Right ventricle myocardium inferior (tissue), 1 donor: ENCODE measurements at regions of chr17 and their contacts with region 1.

Region 1: DNA sequence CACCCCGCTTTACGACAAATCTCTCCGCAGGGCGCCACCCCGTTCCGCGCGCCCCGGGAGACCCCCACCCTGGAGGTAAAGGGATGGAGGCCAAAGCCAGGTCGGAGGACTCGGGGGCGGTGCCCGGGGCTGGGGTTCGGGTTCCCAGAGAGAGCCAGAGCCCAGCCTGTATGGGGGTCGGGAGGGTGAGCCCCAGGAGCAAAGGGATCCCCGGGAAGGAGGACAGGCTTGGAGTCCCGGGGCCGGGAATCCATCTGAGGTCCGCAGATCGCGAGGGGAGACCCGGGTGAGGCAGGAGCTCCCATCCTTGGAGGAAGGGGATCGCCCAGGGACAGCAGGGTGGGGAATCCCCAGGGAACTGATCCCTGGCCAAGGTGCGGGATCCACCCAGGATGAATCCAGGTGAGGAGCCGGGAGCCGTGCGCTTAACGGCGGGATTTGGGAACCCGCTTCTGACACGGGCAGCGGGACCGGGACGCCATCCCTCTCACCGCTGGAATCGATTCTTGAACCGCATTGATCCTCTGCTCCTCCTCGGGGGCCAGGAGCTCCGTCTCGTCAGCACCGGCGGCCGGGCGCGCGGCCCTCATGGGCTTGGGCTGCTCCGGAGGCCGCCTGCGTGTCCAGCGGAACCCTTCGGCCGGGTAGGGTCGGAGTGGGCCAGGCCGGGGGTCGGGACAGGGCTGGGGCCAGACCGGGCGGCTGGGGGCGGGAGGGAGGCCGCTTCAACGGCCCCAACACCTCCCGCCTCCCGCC is at the start of gene MMD:
- DNase-seq: no peak
- ATAC-seq: peak; percentile 1
- total RNA-seq, gene MMD: 15.1 TPM

Region 2: DNA sequence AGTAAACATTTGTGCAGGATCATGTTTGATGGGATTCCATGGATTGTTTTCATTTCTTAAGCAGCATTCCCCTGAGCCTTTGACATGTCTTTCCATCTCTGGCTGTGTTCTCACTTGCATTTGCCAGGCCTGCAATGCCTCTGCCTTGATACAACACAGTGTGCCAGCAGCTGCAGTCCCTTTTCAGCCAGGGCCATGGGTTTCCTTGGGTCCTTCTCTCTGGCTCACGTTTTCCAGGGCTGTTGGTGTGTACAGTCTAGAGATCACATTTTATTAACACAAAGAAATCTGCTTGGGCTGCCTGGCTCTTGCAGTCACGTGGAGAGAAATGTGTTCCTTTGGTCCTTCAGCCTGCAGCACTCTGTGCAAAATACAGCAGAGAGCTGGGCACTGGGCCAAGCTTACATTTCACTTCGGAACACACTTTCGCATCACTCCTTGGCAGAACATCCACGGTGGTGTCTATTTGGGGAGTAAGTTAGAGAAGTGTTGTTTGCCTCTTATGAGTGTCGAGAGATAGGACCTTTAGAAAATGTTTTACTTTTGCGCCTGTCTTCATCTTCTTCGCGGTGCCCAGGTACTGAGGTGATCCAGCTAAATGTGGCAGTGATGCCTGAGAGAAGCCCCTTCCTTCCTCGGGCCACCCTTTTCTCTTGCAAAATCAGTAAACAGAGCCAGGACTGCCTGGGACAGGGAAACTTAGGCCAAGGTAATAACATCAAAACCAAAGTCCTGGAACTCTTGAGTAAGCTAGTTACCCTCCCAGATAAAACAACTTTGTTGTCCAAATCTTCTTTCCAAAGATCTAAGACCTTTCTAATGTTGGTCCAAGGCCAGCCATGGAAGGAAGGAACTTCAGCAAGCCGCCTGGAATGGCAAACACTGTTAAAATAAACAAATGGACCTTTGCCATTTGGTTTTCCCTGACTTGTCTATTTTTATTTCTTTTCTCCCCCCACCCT is 135.7 kb before region 1 on chr17:
- intact Hi-C with region 1: loop called (anchors 5 kb)
- DNase-seq: peak; percentile 92
- ATAC-seq: peak; percentile 85

Region 3: GRCh38 chr17:55437159-55437605 is 15.8 kb after region 1 on chr17:
- intact Hi-C with region 1: no loop called
- DNase-seq: no peak
- ATAC-seq: no peak

Region 4: DNA sequence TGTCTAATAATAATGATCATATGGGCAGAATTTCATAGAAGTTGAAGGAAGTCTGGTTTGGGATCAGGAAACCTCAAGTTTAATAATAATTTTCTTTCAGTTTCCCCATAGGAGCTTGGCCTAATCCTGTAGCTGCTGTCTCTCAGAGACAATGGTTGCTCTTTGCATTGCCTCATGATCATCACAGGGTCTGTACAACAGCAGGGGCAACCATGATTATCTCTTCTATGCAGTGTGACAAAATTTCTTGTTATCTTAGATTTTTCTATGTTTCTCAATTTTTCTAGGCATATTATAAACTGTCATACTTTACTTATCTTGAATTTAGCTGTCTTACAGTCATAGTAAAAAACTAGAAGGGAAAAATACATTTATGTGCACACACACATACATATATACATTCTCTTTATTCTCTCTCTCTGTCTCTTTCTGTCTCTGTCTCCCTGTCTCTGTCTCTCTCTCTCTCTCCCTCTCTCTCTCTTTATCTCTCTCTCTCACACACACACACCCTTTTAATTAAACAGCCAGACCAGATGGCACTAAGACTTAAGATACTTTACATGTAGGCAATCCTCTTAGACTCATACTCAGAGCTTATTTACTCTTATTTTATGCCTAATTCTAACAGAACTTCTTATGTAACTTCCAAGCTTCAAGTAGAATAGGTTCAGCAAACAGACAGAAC is 59.4 kb after region 1 on chr17:
- intact Hi-C with region 1: loop called (anchors 5 kb)
- DNase-seq: no peak
- ATAC-seq: no peak

Region 5: GRCh38 chr17:55513885-55514591 is 92.7 kb after region 1 on chr17:
- intact Hi-C with region 1: loop called (anchors 5 kb)
- DNase-seq: no peak
- ATAC-seq: peak; percentile 59

Region 6: DNA sequence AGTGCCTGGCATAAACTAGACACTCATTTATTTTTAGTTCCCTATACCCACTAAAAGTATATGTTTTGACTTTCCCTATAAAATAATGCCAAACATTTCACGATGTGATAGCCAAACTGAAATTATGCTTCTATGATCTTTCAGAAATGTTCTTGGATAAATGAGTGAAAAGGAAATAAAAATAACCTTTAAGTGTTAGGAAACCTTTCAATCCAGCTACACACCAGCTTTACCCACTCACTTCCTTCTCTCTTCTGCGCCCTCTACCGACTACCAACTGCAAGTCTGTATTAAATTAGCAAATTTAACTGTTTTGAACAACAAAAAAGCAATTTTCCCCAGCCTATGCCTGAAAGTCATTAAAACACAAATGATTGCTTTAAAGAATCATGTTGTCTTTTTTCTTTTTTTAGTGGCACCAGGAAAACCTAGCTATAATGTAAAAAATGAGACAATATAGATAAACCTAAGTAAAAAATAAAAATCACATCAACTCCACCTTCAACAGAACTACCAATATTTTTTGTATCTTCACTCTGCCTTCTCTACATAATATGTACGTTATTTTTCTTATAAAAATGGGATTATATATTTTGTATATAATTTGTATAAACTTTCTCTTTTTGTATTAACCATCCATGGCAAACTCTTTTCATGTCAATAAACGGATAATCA is 314.5 kb after region 1 on chr17:
- intact Hi-C with region 1: loop called (anchors 5 kb)
- DNase-seq: no peak
- ATAC-seq: no peak

Region 7: DNA sequence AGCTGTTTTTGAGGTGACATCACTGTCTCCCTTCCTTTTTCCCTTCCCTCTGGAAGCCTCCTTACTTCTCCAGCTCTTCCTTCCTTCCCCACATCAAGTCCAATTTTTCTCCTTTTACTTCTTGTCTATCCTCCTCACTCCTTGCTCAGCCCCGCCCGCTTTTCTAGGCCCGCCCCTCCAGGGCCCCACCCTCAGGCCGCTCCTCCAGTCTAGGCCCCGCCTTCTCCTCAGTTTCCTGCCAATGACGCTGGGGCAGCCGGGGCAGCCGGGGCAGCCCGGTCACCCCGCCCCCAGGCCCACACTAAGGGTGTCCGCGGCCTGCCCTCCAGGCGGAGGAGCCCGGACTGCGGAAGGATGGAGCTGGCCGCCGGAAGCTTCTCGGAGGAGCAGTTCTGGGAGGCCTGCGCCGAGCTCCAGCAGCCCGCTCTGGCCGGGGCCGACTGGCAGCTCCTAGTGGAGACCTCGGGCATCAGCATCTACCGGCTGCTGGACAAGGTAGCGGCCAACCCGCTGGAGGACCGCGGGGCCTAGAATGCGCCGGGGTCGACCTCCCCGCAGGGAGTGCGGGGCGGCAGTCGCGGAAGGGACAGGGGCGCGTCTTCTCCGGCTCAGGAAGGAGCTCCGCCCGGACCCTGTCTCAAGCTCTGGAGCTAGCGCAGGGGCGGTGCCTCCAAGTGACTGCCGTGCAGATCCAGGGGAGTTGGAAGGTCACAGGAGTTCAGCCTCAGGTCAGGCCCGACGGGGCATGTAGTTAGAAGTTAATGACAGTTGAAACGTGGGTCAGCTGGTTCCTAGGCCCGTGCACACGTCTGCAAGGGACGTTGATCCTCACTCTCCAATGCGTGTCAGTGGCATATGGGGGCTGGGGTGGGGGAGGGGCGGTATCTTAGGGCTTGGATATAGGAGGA is 329.6 kb after region 1 on chr17 and contains the start of gene PCTP:
- intact Hi-C with region 1: loop called (anchors 5 kb)
- DNase-seq: peak; percentile 98
- ATAC-seq: peak; percentile 100
- total RNA-seq, gene PCTP: 21.9 TPM